Left ventricle myocardium superior (tissue), 1 donor: ENCODE measurements at regions of chr10 and their contacts with region 1.

Region 1: GRCh38 chr10:98664331-98665042 is 217.8 kb upstream of the HPS1 start:
- DNase-seq: no peak
- ATAC-seq: no peak

Region 2: DNA sequence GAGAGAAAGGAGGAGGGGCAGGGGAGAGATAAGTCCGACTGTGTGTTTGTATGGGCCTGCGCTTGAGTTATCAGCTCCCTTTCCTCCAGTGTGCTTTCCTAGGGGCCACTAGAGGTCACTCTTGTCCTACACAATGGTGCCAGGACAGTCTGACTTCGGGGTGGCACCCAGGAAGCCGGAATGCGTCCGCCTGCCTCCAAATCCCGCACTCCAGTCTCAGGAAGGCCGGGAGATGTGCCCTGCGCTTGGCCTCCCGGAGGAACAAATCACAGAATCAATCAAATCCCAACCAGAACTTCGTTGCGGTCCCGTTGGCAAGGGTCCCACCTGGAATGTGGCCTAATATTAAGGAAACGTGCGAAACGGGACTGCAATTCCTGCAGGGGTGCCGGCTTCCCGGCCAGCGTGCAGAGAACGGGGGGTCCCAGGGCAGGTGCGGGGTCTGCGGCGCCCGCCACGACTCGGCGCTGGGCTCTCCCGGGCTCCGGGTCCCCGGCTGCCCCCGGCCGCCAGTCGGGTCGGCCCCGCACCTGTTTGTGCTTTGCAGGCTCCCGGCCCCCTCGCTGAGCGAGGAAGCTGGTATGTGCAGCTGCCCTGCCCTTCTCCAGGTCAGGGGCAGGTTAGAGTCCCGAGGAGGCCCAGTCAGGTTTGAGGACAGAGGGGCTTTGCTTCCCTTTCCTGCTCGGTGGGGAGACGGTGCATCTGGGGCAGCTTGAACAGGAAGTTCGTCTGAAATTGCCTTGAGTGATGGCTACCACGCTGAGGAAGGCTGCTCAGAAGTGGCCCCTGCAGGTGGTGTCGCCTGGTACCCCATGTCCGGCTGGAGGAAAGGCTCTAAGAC is 196.8 kb before region 1 on chr10:
- intact Hi-C with region 1: loop called (anchors 10 kb)
- DNase-seq: peak; percentile 77
- ATAC-seq: peak; percentile 94